ENCODE measurements at regions of chr2 and their contacts with region 1.

Region 1: GRCh38 chr2:69914170-69914960 is 544 bp upstream of the MXD1 start:
- DNase-seq: peak; percentile 100
- H3K4me3 Mint-ChIP-seq: peak overlapping the region; percentile 83
- H3K27ac Mint-ChIP-seq: peak overlapping the region; percentile 87
- H3K4me1 Mint-ChIP-seq: peaks cover 36% of the 10 kb centered on the region
- H3K27me3 Mint-ChIP-seq: no peaks in the 10 kb centered on the region

Region 2: DNA sequence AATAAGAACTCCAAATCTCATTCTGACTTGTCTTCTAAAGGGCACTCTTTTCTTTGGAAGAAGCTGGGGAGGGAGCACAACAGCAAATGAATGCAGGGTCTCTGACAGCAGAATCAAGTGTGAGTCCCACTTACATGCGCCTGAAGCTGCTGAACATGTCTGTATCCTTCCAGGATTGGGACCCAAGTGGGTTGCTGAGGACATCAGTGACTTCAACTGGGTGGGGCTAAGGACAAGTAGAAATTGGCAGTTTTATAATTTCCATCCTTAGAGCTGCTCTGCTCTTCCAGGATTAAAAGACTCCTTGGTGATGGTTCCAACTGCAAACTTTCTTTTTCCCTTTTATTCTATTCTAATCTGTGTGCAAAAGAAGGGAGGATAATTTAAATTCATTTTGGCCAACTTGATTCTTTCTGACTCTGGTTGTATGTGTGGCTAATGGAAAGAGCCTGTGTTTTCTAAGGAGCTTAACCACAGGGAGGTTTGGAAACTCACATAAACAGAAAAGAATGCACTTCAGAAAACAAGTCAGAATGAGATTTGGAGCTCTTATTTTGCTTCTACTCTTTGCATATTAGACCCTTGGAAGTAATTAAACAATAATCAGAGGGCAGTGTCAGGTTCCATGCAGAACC is 880.8 kb before region 1 on chr2:
- CTCF ChIA-PET with region 1: no interaction called
- intact Hi-C with region 1: no loop called
- DNase-seq: no peak
- H3K4me3 Mint-ChIP-seq: no peak overlapping the region
- H3K27ac Mint-ChIP-seq: no peak overlapping the region
- H3K4me1 Mint-ChIP-seq: no peaks in the 10 kb centered on the region
- H3K27me3 Mint-ChIP-seq: peaks cover 10% of the 10 kb centered on the region

Region 3: DNA sequence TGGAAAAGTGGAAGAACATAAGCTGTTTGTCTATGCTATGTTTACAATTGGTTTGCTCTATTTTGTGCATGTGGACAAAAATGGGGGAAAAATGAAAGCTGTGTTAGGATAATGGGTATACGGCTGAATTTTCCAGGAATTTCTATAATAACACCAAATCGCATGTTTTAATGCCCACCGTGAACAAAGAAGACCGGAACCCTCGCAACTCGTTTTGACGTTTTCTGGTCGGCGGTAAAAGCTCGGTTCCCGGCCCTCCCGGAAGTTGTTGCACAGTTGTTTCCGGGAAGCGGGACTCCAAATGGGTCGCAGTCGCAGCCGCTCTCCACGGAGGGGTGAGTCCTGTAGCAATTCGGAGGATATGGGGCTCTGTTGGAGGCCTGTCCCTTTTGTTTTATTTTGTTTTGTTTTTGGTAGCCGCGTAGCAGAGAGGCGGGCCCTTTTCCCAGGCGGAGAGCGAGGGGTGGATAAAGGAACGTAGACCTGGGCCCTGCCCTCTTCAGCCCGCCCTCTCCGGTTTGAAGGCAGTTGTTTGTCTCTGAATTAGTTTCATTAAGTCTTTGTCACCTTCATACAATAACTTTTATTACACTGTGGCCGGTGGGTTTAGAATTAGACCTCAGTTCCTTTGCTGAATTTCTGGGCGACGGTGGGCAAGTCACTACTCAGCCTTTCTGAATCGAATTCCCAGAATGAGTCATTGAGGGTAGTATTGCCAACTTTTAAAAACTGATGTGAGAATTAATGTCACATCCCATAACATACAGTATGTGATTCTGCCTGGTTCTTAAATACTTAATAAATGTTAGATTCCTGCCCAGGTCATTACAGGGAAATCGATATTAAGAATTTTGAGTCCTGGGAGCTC is 20.4 kb before region 1 on chr2 and contains the start of gene SNRNP27:
- CTCF ChIA-PET with region 1: interaction called, 4 read pairs
- intact Hi-C with region 1: loop called (anchors 1 kb)
- DNase-seq: peak; percentile 91
- H3K4me3 Mint-ChIP-seq: peak within 1 kb of the TSS; percentile 98
- H3K27ac Mint-ChIP-seq: peak within 1 kb of the TSS; percentile 97
- H3K4me1 Mint-ChIP-seq: peaks cover 41% of the 10 kb centered on the region
- H3K27me3 Mint-ChIP-seq: no peaks in the 10 kb centered on the region
- total RNA-seq, gene SNRNP27: 56.7 to 64.6 TPM

Region 4: DNA sequence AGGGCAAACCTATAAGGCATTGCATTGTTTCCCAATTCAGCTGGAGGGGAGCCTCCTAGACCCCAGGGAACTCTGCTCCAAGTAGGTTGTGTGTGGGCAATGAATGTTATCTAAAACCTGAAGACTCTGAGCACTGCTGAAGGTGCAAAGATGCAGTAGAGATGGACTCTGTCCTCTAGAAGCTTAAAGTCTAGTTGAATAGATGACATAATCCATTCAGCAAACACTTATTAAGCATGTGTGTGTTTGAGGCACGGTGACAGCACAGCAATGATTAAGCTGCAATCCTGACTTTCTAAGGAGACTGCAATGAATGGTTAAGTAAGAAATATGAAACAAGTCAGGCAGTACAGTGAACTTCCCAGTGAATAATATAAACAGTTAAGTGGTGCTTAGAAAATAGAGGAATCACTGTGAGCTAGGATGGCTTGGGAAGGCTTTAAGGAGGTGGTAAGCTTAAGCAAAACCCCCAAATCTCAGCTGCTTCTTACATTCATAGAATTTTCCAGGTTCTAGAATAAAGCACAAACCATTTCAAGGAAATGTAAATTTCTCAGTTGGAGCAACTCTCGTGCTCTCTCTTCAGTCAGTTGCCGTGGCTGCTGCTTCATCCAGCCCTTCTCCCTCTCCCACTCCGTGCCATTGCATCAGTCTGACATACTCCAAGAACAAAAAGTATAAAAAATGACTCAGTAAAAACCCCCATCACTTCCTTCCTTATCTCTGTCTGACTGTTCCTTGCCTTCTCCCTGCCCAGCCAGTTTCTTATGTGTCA is 19.7 kb after region 1 on chr2:
- CTCF ChIA-PET with region 1: interaction called, 26 read pairs
- intact Hi-C with region 1: no loop called
- DNase-seq: peak; percentile 48
- H3K4me3 Mint-ChIP-seq: no peak overlapping the region
- H3K27ac Mint-ChIP-seq: no peak overlapping the region
- H3K4me1 Mint-ChIP-seq: peaks cover 26% of the 10 kb centered on the region
- H3K27me3 Mint-ChIP-seq: no peaks in the 10 kb centered on the region

Region 5: GRCh38 chr2:69985688-69986087 is 71.3 kb after region 1 on chr2:
- CTCF ChIA-PET with region 1: no interaction called
- intact Hi-C with region 1: no loop called
- DNase-seq: no peak
- H3K4me3 Mint-ChIP-seq: no peak overlapping the region
- H3K27ac Mint-ChIP-seq: no peak overlapping the region
- H3K4me1 Mint-ChIP-seq: peaks cover 3% of the 10 kb centered on the region
- H3K27me3 Mint-ChIP-seq: no peaks in the 10 kb centered on the region

Region 6: GRCh38 chr2:70014959-70015358 is 100.6 kb after region 1 on chr2:
- CTCF ChIA-PET with region 1: no interaction called
- intact Hi-C with region 1: no loop called
- DNase-seq: no peak
- H3K4me3 Mint-ChIP-seq: no peak overlapping the region
- H3K27ac Mint-ChIP-seq: peak overlapping the region; percentile 51
- H3K4me1 Mint-ChIP-seq: peaks cover 21% of the 10 kb centered on the region
- H3K27me3 Mint-ChIP-seq: no peaks in the 10 kb centered on the region

Region 7: DNA sequence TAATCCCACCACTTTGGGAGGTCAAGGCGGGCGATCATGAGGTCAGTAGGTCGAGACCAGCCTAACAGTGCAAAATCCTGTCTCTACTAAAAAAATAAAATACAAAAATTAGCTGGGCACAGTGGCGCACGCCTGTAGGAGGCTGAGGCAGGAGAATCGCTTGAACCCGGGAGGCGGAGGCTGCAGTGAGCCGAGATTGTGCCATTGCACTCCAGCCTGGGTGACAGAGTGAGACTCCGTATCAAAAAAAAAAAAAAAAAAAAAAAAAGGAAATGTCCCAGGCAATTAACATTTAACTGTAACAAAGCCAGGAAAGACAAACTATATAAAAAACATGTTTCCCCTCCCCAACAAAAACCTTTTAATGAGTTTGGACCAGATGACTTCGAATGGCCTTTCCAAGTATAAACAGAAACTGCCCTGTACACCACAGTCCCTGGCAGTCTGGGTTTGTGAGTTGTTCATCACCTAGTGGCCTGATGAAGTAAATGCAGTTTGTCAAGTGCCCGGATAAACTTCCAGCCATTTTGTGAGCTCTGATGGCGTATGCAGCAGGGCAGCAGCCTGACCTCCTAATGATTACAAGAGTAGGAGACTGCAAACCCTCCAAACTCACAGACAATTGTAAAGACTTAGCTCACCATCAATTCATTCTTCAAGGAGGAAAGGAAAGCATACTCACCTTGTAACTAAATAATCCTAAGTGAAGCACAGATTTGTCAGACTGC is 156.3 kb after region 1 on chr2:
- CTCF ChIA-PET with region 1: interaction called, 47 read pairs
- intact Hi-C with region 1: loop called (anchors 1 kb)
- DNase-seq: peak; percentile 76
- H3K4me3 Mint-ChIP-seq: peak overlapping the region; percentile 54
- H3K27ac Mint-ChIP-seq: peak overlapping the region; percentile 94
- H3K4me1 Mint-ChIP-seq: peaks cover 57% of the 10 kb centered on the region
- H3K27me3 Mint-ChIP-seq: no peaks in the 10 kb centered on the region

Region 8: GRCh38 chr2:70190418-70191243 is 276.3 kb after region 1 on chr2 and contains the start of gene C2orf42:
- CTCF ChIA-PET with region 1: interaction called, 4 read pairs
- intact Hi-C with region 1: loop called (anchors 1 kb)
- DNase-seq: peak; percentile 98
- H3K4me3 Mint-ChIP-seq: peak within 1 kb of the TSS; percentile 87
- H3K27ac Mint-ChIP-seq: peak within 1 kb of the TSS; percentile 98
- H3K4me1 Mint-ChIP-seq: peaks cover 21% of the 10 kb centered on the region
- H3K27me3 Mint-ChIP-seq: no peaks in the 10 kb centered on the region
- total RNA-seq, gene C2orf42: 19.2 to 23.3 TPM